ENCODE measurements at regions of chr2 and their contacts with region 1.

Region 1: DNA sequence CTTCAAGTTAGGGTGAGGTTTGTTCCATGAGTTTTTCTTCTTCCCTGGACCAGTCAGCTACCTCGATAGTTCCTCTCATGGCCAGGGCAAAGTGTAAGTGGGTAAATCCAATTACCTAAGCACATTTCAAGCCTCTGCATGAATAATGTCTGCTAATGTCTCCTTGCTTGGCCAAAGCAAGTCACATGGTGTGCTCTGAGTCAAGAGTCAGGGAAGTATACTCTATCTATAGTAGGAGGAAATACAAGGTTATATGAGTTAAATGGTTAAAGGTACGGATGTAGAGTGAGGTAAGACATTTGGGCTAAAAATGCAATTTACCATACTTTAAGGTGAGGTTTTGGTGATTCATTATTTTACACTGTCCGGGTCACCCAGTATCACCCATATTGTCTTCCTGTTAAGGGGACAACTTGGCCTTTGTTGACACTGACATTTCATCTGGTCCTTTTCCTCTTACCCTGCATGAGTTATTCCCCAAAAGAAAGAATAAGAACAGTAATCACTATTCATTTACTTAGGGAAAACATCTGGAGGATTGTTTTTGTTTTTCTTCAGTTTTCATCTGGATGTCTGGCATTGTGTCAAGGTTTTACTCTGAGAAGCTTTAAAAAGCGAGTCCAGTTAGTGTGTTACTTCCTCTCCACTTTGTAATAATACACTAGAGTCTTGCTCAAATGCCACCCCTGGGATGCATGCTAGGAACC is 405.5 kb downstream of the RND3 start:
- DNase-seq: peak; percentile 61
- H3K4me3 ChIP-seq: no peak overlapping the region
- H3K27ac ChIP-seq: peak overlapping the region; percentile 55
- H3K4me1 ChIP-seq: peaks cover 27% of the 10 kb centered on the region
- H3K27me3 ChIP-seq: no peaks in the 10 kb centered on the region
- CTCF ChIP-seq: no peak
- POLR2A ChIP-seq: no peak

Region 2: GRCh38 chr2:149743842-149744448 is 338.0 kb before region 1 on chr2:
- CTCF ChIA-PET with region 1: no interaction called
- POLR2A ChIA-PET with region 1: no interaction called
- dilution Hi-C with region 1: no loop called
- intact Hi-C with region 1: loop called (anchors 2 kb)
- DNase-seq: no peak
- H3K4me3 ChIP-seq: no peak overlapping the region
- H3K27ac ChIP-seq: no peak overlapping the region
- H3K4me1 ChIP-seq: peaks cover 23% of the 10 kb centered on the region
- H3K27me3 ChIP-seq: no peaks in the 10 kb centered on the region
- CTCF ChIP-seq: no peak
- POLR2A ChIP-seq: no peak

Region 3: DNA sequence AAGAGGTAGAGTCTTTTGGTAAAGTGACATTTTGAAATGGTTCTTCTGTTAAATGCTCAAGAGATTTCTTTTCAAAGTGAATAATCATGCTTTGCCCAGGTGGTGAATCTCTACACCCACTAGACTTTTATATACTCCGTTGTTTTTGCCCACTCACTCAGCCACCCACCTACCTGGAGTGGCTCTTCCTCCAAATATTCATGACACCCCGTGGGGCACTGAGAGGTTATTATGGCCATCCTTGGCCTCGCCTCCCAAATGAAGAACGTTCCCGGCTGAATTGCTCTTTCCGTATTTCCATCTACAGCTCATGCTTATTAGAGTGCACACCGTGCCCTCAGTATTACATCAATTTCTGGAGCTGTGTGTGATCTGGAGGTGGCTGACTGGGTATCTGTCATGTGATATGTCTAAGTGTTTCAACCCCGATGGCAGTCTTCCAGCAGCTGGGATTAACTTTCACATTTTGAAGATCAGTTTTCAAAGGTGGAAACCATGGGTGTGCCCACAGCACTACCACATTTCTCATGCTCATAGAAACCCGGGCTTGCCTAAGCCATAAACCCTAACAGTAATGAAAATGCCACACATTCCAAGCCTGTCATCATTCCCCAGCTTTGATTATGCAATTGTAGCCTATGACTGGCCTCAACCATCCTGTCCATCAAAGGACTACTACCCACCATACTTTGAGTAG is 87.7 kb before region 1 on chr2:
- CTCF ChIA-PET with region 1: no interaction called
- POLR2A ChIA-PET with region 1: no interaction called
- dilution Hi-C with region 1: no loop called
- intact Hi-C with region 1: loop called (anchors 5 kb)
- DNase-seq: no peak
- H3K4me3 ChIP-seq: no peak overlapping the region
- H3K27ac ChIP-seq: no peak overlapping the region
- H3K4me1 ChIP-seq: peaks cover 14% of the 10 kb centered on the region
- H3K27me3 ChIP-seq: no peaks in the 10 kb centered on the region
- CTCF ChIP-seq: no peak
- POLR2A ChIP-seq: no peak

Region 4: DNA sequence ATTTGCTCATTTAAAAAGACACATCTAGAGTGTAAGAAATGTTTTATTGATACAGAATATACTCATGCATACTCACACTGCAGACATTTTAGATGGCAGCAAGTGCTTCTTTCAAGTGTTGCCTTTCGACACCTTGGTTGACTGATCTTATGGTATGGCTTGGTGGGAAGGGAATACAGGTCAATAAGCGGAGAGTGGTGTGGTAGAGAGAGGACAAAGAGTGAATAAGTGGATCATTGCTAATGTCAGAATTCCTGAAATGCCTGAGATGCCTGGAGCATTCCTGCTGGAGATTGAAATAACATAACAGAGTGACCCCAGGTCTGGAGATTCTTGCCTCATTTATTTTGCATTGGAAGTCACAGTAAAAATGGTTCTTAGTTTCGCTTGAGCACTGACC is 328.9 kb after region 1 on chr2:
- CTCF ChIA-PET with region 1: no interaction called
- POLR2A ChIA-PET with region 1: no interaction called
- dilution Hi-C with region 1: no loop called
- intact Hi-C with region 1: loop called (anchors 5 kb)
- DNase-seq: peak; percentile 85
- H3K4me3 ChIP-seq: no peak overlapping the region
- H3K27ac ChIP-seq: peak overlapping the region; percentile 95
- H3K4me1 ChIP-seq: peaks cover 40% of the 10 kb centered on the region
- H3K27me3 ChIP-seq: no peaks in the 10 kb centered on the region
- CTCF ChIP-seq: no peak
- POLR2A ChIP-seq: peak; percentile 39

Measured in endothelial cell of umbilical vein (primary cell).